CD8-positive, alpha-beta T cell (primary cell): ENCODE measurements at regions of chr3 and their contacts with region 1.

Region 1: DNA sequence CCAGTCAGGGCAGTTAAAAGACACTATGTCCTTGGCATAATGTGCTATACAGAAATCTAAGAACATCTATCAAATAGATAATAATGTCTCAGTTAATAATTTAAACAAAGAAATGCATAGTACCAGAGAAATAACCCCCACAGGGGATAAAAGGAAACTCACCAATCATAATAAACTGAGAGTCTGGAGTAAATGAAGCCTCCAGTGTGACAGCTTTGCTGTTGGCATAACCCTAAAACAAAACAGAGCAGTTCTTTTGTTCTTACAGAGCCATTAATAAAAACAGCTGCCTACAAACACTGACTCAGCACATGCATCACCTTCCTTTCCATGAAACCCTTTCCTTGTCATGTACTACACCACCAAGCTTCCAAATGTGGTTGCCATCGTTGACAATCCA is 13.5 kb downstream of the PPM1M start:
- DNase-seq: no peak
- ATAC-seq: no peak
- H3K4me3 ChIP-seq: no peak overlapping the region
- H3K4me3 Mint-ChIP-seq: no peak overlapping the region
- H3K27ac ChIP-seq: peak overlapping the region in 1 of 2 experiments; percentile 6
- H3K27ac Mint-ChIP-seq: peak overlapping the region; percentile 100
- H3K4me1 ChIP-seq: peaks cover 91% of the 10 kb centered on the region
- H3K4me1 Mint-ChIP-seq: peaks cover 94% of the 10 kb centered on the region
- H3K27me3 ChIP-seq: no peaks in the 10 kb centered on the region
- H3K27me3 Mint-ChIP-seq: no peaks in the 10 kb centered on the region
- CTCF ChIP-seq: no peak

Region 2: DNA sequence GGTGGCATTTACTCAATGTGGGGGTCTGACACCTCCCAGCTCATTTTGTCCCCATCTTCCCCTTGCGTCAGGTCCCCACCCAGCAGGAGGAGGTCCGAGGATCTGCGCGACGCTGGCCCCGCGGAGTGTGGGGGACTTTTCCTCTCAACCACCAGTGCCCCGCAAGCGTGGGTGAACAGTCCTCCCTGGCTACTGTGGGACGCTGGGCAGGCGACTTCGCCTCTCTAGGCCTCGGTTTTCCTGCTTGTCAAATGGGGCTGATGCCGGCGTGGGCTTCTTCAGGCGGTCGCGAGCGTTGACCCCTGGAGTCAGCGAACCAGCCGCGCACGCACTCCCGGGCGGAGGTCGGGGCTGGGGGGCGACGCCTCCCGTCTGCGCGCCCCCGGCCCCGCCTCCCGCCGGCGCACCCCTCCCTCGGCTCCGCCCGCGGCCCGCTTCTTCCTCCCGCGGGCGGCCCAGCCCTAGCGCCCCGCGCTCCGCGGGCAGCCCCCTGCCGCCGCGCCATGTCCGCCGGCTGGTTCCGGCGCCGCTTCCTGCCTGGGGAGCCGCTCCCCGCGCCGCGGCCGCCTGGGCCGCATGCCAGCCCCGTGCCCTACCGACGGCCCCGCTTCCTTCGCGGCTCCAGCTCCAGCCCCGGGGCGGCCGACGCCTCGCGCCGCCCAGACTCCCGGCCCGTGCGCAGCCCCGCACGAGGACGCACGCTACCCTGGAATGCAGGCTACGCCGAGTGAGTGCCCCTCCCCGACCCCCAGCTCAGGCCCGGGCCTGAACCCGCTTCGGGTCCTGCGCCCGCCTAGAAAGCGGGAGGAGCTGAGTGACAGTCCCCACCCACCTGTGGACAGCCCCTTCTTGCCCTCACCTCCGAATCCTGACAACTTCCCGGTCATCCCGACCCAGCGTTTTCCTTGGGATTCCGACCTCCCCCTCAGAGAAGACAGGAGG is 13.4 kb before region 1 on chr3 and contains the start of gene PPM1M:
- CTCF ChIA-PET with region 1: interaction called, 34 read pairs
- POLR2A ChIA-PET with region 1: interaction called, 160 read pairs
- intact Hi-C with region 1: no loop called
- DNase-seq: peak in 8 of 9 experiments; percentile 51 to 89 (median 66)
- ATAC-seq: peak; percentile 66
- H3K4me3 ChIP-seq: peak within 1 kb of the TSS; percentile 70 to 74
- H3K4me3 Mint-ChIP-seq: peak within 1 kb of the TSS; percentile 88
- H3K27ac ChIP-seq: peak within 1 kb of the TSS; percentile 91
- H3K27ac Mint-ChIP-seq: peak within 1 kb of the TSS; percentile 96
- H3K4me1 ChIP-seq: peaks cover 84% of the 10 kb centered on the region
- H3K4me1 Mint-ChIP-seq: peaks cover 83% of the 10 kb centered on the region
- H3K27me3 ChIP-seq: no peaks in the 10 kb centered on the region
- H3K27me3 Mint-ChIP-seq: no peaks in the 10 kb centered on the region
- CTCF ChIP-seq: no peak
- total RNA-seq, gene PPM1M: 43.9 to 46.9 TPM

Region 3: GRCh38 chr3:52270252-52270754 is 11.3 kb after region 1 on chr3:
- CTCF ChIA-PET with region 1: interaction called, 622 read pairs
- POLR2A ChIA-PET with region 1: interaction called, 685 read pairs
- intact Hi-C with region 1: loop called (anchors 1 kb)
- DNase-seq: no peak
- ATAC-seq: no peak
- H3K4me3 ChIP-seq: peak overlapping the region in 1 of 2 experiments; percentile 10
- H3K4me3 Mint-ChIP-seq: peak overlapping the region; percentile 82
- H3K27ac ChIP-seq: peak overlapping the region; percentile 34 to 68
- H3K27ac Mint-ChIP-seq: peak overlapping the region; percentile 95
- H3K4me1 ChIP-seq: peaks cover 73% of the 10 kb centered on the region
- H3K4me1 Mint-ChIP-seq: peaks cover 86% of the 10 kb centered on the region
- H3K27me3 ChIP-seq: no peaks in the 10 kb centered on the region
- H3K27me3 Mint-ChIP-seq: no peaks in the 10 kb centered on the region
- CTCF ChIP-seq: no peak

Region 4: DNA sequence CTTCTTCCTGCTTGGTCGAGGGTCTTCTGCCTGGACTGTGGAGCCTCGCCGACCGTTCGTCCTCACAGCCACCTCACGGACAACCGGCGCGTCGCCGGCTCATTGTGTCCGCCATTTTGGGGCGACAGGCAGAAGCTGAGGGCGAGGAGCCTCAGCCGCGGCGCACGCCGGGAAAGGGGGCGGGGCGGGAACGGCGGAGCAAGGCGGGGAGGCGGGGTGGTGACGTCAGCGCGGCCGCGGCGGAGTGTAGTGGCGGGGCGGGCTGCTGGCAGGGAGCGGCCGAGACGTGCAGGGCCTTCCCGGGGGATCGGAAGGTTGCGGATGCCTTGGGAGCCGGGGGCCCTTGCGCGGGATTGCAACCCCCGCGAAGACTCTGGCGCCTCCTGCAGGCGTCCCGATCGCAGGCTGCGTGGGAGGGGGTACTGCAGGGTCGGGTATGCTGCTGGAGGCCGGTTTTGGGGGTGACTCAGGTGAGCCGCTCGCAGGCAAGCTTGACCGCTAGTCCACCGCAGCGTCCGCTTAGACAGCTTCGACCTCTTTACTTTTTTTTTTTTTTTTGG is 19.6 kb after region 1 on chr3 and contains the start of gene WDR82:
- CTCF ChIA-PET with region 1: interaction called, 622 read pairs
- POLR2A ChIA-PET with region 1: interaction called, 685 read pairs
- intact Hi-C with region 1: no loop called
- DNase-seq: peak; percentile 94 to 99 (median 98)
- ATAC-seq: peak; percentile 77
- H3K4me3 ChIP-seq: peak within 1 kb of the TSS; percentile 65 to 95
- H3K4me3 Mint-ChIP-seq: peak within 1 kb of the TSS; percentile 94
- H3K27ac ChIP-seq: peak within 1 kb of the TSS; percentile 79 to 93
- H3K27ac Mint-ChIP-seq: peak within 1 kb of the TSS; percentile 99
- H3K4me1 ChIP-seq: peaks cover 49% of the 10 kb centered on the region
- H3K4me1 Mint-ChIP-seq: peaks cover 72% of the 10 kb centered on the region
- H3K27me3 ChIP-seq: no peaks in the 10 kb centered on the region
- H3K27me3 Mint-ChIP-seq: no peaks in the 10 kb centered on the region
- CTCF ChIP-seq: peak; percentile 36
- total RNA-seq, gene WDR82: 115 to 117 TPM